ENCODE measurements at regions of chr5 and their contacts with region 1.

Region 1: GRCh38 chr5:168423478-168423877 is 62.8 kb upstream of the RARS1 start:
- DNase-seq: no peak
- ATAC-seq: no peak
- H3K4me3 Mint-ChIP-seq: no peak overlapping the region
- H3K27ac Mint-ChIP-seq: no peak overlapping the region
- H3K4me1 Mint-ChIP-seq: no peaks in the 10 kb centered on the region
- H3K27me3 Mint-ChIP-seq: no peaks in the 10 kb centered on the region
- CTCF ChIP-seq: no peak

Region 2: DNA sequence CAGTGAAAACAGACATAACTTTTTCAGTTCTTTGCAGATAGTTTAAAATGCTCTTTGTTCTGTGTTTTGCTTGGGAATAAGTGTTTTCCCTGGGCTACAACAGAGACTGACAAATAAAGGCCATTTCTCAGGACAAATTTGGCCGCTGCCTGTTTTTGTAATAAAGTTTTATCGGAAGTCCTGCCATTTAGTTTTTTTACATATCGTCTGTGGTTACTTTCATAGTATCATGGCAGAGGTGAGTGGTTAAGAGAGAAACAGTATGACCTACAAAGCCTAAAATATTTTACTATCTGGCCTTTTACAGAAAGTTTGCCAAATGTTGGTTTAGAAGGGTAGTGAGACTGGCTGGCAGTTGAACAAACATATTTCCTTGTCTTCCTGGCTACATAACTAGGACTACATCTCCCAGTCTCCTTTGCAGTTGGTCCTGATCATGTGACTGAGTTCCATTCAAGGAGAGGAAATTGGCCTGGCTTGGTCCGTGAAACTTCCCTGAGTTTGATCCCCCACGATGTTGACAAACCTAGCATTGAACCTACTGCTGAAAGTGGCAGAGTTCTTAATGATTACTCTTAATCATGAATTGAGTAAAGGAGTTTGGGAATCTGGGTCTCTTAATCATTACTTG is 596.5 kb after region 1 on chr5:
- CTCF ChIA-PET with region 1: no interaction called
- POLR2A ChIA-PET with region 1: interaction called, 14 read pairs
- intact Hi-C with region 1: no loop called
- DNase-seq: no peak
- ATAC-seq: no peak
- H3K4me3 Mint-ChIP-seq: no peak overlapping the region
- H3K27ac Mint-ChIP-seq: no peak overlapping the region
- H3K4me1 Mint-ChIP-seq: no peaks in the 10 kb centered on the region
- H3K27me3 Mint-ChIP-seq: peaks cover 7% of the 10 kb centered on the region
- CTCF ChIP-seq: no peak

Region 3: DNA sequence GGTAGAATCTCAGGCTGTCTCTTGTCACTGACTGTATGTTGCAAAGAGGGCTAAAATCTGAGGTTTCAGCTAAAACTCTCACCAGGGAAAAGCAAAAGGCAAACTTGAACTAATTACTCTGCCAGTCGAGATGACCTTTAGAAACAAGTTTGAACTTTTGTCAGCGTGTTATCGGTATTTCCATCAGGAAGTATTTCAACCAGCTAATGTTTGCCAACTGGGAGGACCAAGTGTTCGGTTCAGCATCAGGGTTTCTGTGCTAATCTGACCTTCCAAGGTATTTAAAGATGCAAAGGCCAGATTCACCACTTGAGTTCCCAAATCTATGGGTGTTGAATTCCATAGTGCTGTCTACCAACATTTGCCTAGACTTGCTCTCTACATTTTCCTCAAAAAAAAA is 646.9 kb after region 1 on chr5:
- CTCF ChIA-PET with region 1: no interaction called
- POLR2A ChIA-PET with region 1: no interaction called
- intact Hi-C with region 1: no loop called
- DNase-seq: no peak
- ATAC-seq: no peak
- H3K4me3 Mint-ChIP-seq: no peak overlapping the region
- H3K27ac Mint-ChIP-seq: no peak overlapping the region
- H3K4me1 Mint-ChIP-seq: no peaks in the 10 kb centered on the region
- H3K27me3 Mint-ChIP-seq: no peaks in the 10 kb centered on the region
- CTCF ChIP-seq: no peak

Measured in activated B cell treated with CpG ODN at 0.5 μM for 24 hours (primary cell).